Common myeloid progenitor, CD34-positive (primary cell): ENCODE measurements at regions of chr16 and their contacts with region 1.

Region 1: GRCh38 chr16:31696968-31697743 is 169.5 kb downstream of the AHSP start:
- DNase-seq: peak; percentile 54 to 66 (median 63)
- H3K4me3 ChIP-seq: no peak overlapping the region
- H3K27ac ChIP-seq: no peak overlapping the region
- H3K4me1 ChIP-seq: peaks cover 10 to 40% (median 28%) of the 10 kb centered on the region in 4 experiments
- H3K27me3 ChIP-seq: peaks cover 0 to 9% (median 0%) of the 10 kb centered on the region in 5 experiments

Region 2: DNA sequence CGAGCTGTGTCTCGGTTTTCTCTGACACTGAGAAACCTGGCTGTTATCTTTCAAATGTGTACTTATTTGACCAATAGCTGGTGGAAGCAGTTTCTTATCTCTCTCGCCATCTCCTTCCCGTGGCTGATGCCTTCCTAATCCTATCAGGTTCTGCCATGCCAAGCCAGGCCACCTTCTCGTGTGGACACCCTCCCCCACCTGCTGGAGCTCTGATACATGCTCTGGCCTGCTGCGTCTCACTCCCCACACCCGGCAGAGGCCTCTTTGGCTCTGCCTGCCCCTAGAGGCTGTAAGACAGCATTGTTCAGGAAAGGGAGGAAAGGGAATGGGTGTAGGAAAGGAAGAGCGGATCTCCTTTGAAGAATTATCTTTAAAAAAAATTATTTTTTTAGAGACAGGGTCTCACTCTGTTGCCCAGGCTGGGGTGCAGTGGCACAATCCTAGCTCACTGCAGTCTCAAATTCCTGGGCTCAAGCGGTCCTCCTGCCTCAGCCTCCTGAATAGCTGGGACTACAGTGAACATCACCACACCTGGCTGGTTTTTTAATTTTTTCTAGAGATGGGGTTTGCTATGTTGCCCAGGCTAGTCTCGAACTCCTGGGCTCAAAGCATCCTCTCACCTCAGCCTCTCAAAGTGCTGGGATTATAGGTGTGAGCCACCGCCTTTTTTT is 245.3 kb before region 1 on chr16:
- CTCF ChIA-PET with region 1: interaction called, 30 read pairs
- POLR2A ChIA-PET with region 1: no interaction called
- DNase-seq: peak; percentile 48 to 75 (median 63)
- H3K4me3 ChIP-seq: no peak overlapping the region
- H3K27ac ChIP-seq: peak overlapping the region in 1 of 2 experiments; percentile 49
- H3K4me1 ChIP-seq: peaks cover 1 to 53% (median 40%) of the 10 kb centered on the region in 4 experiments
- H3K27me3 ChIP-seq: no peaks in the 10 kb centered on the region

Region 3: GRCh38 chr16:31458844-31459721 is 238.1 kb before region 1 on chr16 and contains the start of gene ARMC5:
- CTCF ChIA-PET with region 1: interaction called, 30 read pairs
- POLR2A ChIA-PET with region 1: interaction called, 4 read pairs
- DNase-seq: peak; percentile 98 to 99 (median 99)
- H3K4me3 ChIP-seq: peak within 1 kb of the TSS; percentile 66 to 90 (median 86)
- H3K27ac ChIP-seq: peak within 1 kb of the TSS; percentile 97 to 98
- H3K4me1 ChIP-seq: peaks cover 2 to 59% (median 50%) of the 10 kb centered on the region in 4 experiments
- H3K27me3 ChIP-seq: no peaks in the 10 kb centered on the region

Region 4: DNA sequence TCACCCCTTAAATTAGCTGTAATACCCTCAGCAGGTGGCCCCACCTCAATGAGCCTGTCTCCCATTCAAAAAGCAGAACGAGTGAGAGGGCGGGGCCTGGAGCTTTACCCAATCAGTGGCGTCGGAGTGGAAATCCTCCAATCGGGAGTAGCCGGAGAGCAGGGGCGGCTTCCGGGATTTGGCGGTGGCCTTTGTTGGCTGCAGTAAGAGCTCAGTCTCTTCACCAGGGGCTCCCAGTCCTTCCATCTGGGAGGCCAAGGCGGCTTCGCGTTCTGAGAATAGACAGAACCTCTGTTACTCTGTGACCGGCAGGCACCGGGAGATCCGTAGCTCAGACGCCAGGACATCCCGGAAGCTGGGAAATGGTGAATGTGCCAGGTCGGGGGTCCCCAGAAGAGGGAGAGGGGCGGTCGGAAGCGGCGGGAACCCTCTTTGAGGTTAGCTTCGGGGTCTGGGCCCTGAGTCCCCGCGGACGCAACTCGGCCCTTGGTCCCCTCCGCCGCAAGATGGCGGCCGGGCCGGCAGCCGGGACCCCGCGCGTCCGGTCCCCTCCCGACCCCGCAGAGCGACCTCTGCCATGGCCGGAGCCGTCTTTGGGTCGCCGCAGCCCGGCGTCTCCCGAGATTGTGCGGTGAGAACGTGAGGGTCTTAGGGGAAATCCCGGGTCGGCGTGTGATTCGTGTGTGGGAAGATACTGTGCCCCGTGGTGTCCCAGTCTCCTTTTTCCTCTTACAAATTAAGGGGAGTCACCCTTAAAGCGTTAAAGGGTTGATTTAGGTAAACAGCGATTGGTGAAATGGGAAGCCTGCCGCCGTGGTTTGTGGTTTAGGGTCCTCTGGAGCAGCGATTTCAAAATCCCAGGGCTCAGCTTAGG is 16.2 kb after region 1 on chr16:
- CTCF ChIA-PET with region 1: interaction called, 17 read pairs
- POLR2A ChIA-PET with region 1: interaction called, 3 read pairs
- DNase-seq: peak; percentile 94 to 97 (median 97)
- H3K4me3 ChIP-seq: peak overlapping the region; percentile 71 to 94 (median 91)
- H3K27ac ChIP-seq: peak overlapping the region; percentile 84 to 96
- H3K4me1 ChIP-seq: peaks cover 6 to 27% (median 15%) of the 10 kb centered on the region in 4 experiments
- H3K27me3 ChIP-seq: no peaks in the 10 kb centered on the region